Activated B cell treated with CpG ODN at 0.5 μM for 24 hours (primary cell): ENCODE measurements at regions of chr20 and their contacts with region 1.

Region 1: GRCh38 chr20:15515691-15516090 is 1057.6 kb downstream of the KIF16B start:
- DNase-seq: no peak
- ATAC-seq: no peak
- H3K4me3 Mint-ChIP-seq: no peak overlapping the region
- H3K27ac Mint-ChIP-seq: no peak overlapping the region
- H3K4me1 Mint-ChIP-seq: peaks cover 4% of the 10 kb centered on the region
- H3K27me3 Mint-ChIP-seq: no peaks in the 10 kb centered on the region
- CTCF ChIP-seq: no peak

Region 2: DNA sequence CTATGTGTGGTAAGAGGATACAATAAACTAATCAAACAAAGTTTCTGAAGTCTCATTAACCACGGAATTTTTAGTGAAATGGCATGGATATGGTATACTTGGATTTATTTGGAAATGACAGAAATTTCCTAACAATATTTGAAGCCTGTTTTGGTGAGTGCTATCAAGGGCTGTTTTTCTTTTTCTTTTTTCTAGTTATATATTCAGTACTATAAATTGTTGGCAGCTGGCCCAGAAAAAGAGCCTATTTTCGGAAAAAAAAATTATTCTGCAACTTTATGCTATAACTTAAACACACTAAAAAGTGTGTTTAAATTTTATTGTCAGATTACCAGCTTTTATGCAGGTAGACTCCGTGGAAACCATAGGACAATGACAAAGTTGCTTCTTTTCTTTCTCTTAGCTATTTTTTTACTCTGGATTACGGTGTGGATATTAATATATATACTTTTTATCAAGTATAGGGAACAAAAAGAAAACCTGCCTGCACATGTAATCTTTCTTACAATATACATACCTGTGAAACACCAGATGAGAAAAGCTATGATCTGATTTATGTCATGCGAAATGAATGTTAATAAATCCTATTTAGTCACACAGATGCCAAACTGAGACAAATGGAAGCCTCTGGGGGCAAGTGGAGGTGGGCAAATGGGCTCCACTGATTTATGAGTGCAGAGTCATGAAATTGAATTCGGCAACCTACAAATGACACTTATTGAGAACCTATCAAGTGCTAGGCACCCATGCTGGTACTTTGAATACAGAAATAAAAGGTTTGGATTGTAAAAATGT is 258.8 kb before region 1 on chr20:
- CTCF ChIA-PET with region 1: no interaction called
- POLR2A ChIA-PET with region 1: interaction called, 18 read pairs
- intact Hi-C with region 1: no loop called
- DNase-seq: no peak
- ATAC-seq: no peak
- H3K4me3 Mint-ChIP-seq: no peak overlapping the region
- H3K27ac Mint-ChIP-seq: no peak overlapping the region
- H3K4me1 Mint-ChIP-seq: no peaks in the 10 kb centered on the region
- H3K27me3 Mint-ChIP-seq: no peaks in the 10 kb centered on the region
- CTCF ChIP-seq: no peak

Region 3: DNA sequence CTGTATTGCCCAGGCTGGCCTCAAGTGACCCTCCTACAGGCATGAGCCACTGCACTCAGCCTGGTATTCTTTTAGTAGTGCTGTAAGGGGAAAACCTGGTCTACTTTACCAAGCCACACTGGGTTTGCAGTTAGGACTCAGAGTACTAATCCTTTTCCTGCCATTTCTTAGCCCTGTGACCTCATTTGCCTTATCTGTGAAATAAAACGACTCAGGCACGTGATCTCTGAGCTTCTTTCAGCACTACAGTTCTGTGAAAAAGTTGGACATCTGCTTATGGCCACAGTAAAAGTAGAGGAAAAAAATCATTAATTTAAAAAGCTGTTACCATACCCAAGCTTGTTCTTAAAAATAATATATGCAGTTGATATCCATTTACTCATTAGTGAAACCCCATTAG is 50.1 kb after region 1 on chr20:
- CTCF ChIA-PET with region 1: no interaction called
- POLR2A ChIA-PET with region 1: no interaction called
- intact Hi-C with region 1: no loop called
- DNase-seq: no peak
- ATAC-seq: no peak
- H3K4me3 Mint-ChIP-seq: no peak overlapping the region
- H3K27ac Mint-ChIP-seq: no peak overlapping the region
- H3K4me1 Mint-ChIP-seq: peaks cover 12% of the 10 kb centered on the region
- H3K27me3 Mint-ChIP-seq: peaks cover 13% of the 10 kb centered on the region
- CTCF ChIP-seq: no peak